ENCODE measurements at regions of chr19 and their contacts with region 1.

Region 1: DNA sequence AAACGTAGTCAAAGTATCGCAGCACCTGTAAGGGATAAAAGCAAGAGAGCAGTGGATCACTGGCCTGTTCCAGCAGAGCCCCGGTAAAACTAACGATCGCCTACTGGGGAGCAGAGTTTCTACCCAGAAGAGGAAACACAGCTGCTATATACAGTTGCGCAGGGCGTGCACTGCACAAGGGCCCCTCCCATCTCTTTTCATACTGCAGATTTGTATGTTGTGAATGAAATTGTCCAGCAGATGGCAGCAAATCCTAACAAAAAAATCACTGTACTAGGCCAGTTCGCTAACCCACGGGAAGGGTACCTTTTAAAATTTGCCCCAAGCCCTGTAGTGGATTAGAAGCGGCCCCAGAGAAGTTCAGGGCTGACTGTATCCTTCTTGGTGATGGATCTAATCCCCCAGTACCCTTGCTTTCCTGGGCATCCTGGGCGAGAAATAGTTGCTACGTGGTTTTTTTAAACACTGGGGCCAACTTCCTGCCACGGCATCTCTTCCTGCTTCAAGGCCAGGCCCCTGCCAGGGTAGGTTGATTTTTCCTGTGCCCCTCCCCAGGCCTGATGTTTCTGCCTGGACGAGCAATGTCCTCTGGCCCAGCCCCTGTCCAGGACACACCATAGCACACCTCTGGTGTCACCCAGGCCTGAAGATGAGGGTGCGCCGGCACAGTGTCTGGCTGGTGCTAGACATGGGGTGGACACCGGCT is 127.0 kb downstream of the IER2 start:
- DNase-seq: peak; percentile 64
- ATAC-seq: peak; percentile 95
- H3K4me3 ChIP-seq: no peak overlapping the region
- H3K27ac ChIP-seq: peak overlapping the region; percentile 17; the same call in 1 of the 2 replicates
- H3K4me1 ChIP-seq: no peaks in the 10 kb centered on the region; the same call in 1 of the 2 replicates
- H3K27me3 ChIP-seq: no peaks in the 10 kb centered on the region
- CTCF ChIP-seq: no peak; the same call in 1 of the 2 replicates

Region 2: DNA sequence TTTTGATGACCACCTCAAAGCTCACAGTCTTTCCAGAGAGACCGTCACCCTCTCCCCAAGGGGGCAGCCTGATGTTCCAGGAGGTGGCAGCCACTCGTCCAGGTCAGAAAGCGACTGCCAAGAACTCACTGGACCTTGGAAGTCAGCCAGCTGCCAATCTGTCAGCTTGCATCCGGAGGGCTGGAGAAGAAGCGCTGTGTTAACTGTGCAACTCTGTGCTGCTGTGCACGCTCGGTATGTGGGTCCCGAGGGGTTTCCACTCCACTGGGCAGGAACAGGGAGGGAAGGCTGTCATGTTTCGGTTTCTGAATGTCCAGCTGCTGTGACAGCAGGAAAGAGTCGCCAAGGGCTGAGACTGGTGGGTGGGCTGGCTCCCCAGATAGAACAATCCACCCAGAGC is 139.8 kb after region 1 on chr19:
- CTCF ChIA-PET with region 1: no interaction called
- POLR2A ChIA-PET with region 1: no interaction called
- in situ Hi-C with region 1: no loop called
- intact Hi-C with region 1: no loop called
- DNase-seq: no peak
- ATAC-seq: no peak
- H3K4me3 ChIP-seq: no peak overlapping the region
- H3K27ac ChIP-seq: no peak overlapping the region
- H3K4me1 ChIP-seq: no peaks in the 10 kb centered on the region
- H3K27me3 ChIP-seq: no peaks in the 10 kb centered on the region
- CTCF ChIP-seq: no peak

Region 3: DNA sequence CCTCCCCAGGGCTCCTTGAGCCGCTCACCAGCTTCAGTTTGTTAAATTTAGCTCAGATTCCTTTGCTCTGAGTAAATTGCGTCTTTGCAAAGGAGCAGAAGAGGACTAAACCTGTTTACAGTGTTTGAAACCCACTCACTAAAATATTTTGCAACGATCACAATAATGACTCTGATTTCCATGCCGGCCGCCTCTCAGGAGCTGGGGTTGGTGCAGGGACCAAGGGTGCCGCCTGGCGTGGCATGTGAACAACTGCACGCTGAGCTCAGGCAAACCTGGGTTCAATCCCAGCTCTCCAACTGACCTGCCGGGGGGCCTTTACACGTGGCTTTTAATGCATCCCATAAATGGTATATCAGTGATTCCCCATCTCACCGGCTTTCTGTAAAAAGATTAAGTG is 297.7 kb after region 1 on chr19:
- CTCF ChIA-PET with region 1: interaction called, 19 read pairs
- POLR2A ChIA-PET with region 1: no interaction called
- in situ Hi-C with region 1: no loop called
- intact Hi-C with region 1: no loop called
- DNase-seq: no peak
- ATAC-seq: peak; percentile 75; the same call in 1 of the 2 replicates
- H3K4me3 ChIP-seq: no peak overlapping the region
- H3K27ac ChIP-seq: no peak overlapping the region
- H3K4me1 ChIP-seq: no peaks in the 10 kb centered on the region
- H3K27me3 ChIP-seq: no peaks in the 10 kb centered on the region
- CTCF ChIP-seq: peak; percentile 82

Region 4: DNA sequence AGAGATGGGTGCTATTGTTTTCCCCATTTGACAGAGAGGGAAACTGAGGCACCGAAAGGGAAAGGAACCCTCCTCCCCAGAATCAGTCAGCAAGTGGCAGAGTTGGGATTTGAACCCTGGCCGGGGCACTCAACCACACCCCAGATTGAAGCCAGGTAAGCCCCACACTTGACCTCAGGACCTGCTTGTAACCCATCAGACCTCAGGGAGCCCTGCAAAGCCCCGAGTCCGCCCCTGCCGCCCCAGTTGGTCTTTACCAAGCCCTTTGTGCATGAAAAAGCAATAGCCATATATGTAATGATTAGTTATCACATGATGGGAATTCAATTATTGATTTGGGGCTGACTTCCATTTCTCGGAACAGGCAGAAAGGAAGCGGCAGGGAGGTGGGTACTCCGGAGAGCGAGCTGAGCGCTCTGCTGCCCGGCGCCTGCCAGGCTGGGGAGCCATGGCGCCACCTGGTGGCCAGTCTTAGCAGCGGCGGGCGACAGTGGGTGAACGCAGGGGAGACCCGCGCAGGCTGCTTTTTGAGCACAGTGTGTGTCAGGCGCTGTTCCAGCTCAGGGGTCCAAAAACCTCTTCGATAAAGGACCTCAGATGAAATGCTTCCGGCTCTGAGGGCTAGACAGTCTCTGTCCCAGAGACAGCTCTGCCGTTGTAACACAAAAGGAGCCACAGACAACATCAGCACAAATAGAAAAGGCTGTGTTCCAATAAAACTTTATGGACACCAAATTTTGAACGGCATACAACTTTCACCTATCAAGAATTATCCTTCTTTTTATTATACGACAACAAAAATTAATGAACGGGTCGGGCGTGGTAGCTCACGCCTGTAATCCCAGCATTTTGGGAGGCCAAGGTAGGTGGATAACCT is 311.9 kb after region 1 on chr19:
- CTCF ChIA-PET with region 1: interaction called, 3 read pairs
- POLR2A ChIA-PET with region 1: no interaction called
- in situ Hi-C with region 1: no loop called
- intact Hi-C with region 1: loop called (anchors 2 kb)
- DNase-seq: peak; percentile 30
- ATAC-seq: peak; percentile 99
- H3K4me3 ChIP-seq: peak overlapping the region in 1 of 2 experiments; percentile 26; a peak in 1 of 4 replicates
- H3K27ac ChIP-seq: no peak overlapping the region
- H3K4me1 ChIP-seq: no peaks in the 10 kb centered on the region
- H3K27me3 ChIP-seq: no peaks in the 10 kb centered on the region
- CTCF ChIP-seq: peak; percentile 94